Right ventricle myocardium inferior (tissue), 1 donor: ENCODE measurements at regions of chr7 and their contacts with region 1.

Region 1: DNA sequence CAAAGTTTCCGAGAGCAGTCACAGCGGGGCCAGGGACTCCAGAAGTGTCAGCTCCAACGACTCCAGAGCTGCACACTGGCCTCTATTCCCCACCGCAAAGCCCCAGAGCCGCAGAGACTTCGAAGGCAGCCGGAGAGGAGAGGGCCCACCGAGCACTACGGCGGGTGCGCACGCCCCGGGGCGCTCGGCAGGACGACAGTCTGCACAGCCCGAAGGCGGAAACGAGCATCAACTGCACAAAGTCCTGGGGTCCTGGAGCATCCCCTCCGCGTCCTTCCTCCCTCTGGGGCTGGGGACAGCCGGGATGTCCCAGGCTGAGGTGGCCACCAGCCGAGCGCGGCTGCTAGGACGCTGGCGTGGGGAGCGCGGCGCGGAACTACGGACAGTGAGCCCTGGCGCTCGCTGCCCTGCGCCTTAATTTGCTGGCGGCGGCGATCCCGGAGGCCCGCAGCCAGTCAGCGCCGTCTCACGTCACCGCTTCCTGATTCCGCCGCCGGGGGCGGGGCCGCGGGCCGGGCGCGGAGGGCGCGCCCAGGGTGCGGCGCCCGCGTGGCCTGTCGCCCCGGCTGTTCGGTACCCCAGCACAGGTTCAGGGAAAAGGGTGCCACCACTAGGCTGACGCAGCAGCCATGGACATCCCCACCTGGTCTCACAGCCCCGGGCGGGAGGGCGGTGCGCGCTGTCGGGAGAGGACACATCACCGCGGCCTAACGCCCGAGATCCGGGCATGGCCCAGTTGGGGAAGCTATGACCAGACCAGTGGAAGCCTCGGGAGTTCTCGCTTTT is at the start of gene TBX20:
- DNase-seq: peak; percentile 90
- ATAC-seq: peak; percentile 80
- total RNA-seq, gene TBX20: 138 TPM

Region 2: DNA sequence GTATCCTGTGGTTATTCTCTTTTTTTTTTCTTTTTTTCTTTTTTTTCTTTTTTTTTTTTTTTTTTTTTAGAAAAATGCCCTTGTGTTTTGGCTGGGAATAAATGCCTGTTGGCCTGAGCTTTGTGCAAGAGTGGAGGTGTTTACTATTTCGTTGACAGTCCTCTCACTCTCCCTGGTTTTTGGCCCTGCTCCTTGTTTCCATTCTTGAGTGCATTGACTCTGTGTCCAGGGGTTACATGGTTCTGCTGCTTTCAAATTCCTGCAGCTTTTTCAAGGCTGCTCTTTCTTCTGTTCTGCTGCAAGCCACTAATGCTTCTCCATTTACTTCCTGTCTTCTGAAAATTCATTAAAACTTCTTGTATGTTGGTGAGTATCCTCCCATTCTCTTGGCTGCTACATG is 59.7 kb after region 1 on chr7:
- intact Hi-C with region 1: loop called (anchors 5 kb)
- DNase-seq: no peak
- ATAC-seq: peak; percentile 87

Region 3: GRCh38 chr7:35379481-35379880 is 125.6 kb after region 1 on chr7:
- intact Hi-C with region 1: loop called (anchors 2 kb)
- DNase-seq: no peak
- ATAC-seq: no peak

Region 4: DNA sequence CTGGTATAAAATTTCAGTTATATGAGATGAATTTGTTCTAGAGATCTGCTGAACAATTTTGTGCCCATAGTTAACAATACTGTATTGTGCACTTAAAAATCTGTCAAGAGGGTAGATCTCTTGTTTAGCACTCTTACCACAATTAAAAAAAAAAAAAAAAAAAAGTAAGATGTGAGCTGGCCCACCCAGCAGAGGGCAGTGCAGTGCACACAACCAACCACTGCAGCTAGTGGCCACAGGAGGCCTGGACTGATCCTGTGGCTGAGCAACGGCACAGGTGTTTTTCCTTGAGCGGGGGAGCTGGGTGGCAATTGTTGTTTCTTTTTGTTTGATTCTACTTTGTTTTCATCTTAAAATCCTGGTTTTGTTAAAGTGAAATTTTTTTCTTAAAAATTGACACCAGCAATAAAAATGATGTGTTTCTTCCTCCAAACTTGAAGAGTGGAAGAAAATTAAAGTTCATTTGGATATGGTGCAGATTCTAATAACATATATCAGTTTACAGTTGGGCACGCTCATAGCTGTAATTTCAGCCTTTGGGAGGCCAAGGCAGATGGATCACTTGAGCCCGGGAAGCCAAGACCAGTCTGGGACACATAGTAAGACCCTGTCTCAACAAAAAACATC is 171.1 kb after region 1 on chr7:
- intact Hi-C with region 1: loop called (anchors 2 kb)
- DNase-seq: peak; percentile 72
- ATAC-seq: peak; percentile 75

Region 5: GRCh38 chr7:35736725-35737124 is 482.8 kb after region 1 on chr7:
- intact Hi-C with region 1: no loop called
- DNase-seq: no peak
- ATAC-seq: no peak